ENCODE measurements at regions of chr10 and their contacts with region 1.

Region 1: GRCh38 chr10:87861953-87862678 is 1.2 kb downstream of the KLLN start:
- DNase-seq: peak; percentile 96
- ATAC-seq: peak; percentile 62
- H3K4me3 Mint-ChIP-seq: peak overlapping the region; percentile 98
- H3K27ac Mint-ChIP-seq: peak overlapping the region; percentile 94
- H3K4me1 Mint-ChIP-seq: peaks cover 28% of the 10 kb centered on the region
- H3K27me3 Mint-ChIP-seq: peaks cover 3% of the 10 kb centered on the region

Region 2: GRCh38 chr10:87850742-87851205 is 11.3 kb before region 1 on chr10:
- CTCF ChIA-PET with region 1: interaction called, 17 read pairs
- POLR2A ChIA-PET with region 1: interaction called, 14 read pairs
- DNase-seq: peak; percentile 74
- ATAC-seq: peak; percentile 94
- H3K4me3 Mint-ChIP-seq: no peak overlapping the region
- H3K27ac Mint-ChIP-seq: no peak overlapping the region
- H3K4me1 Mint-ChIP-seq: peaks cover 22% of the 10 kb centered on the region
- H3K27me3 Mint-ChIP-seq: no peaks in the 10 kb centered on the region

Region 3: DNA sequence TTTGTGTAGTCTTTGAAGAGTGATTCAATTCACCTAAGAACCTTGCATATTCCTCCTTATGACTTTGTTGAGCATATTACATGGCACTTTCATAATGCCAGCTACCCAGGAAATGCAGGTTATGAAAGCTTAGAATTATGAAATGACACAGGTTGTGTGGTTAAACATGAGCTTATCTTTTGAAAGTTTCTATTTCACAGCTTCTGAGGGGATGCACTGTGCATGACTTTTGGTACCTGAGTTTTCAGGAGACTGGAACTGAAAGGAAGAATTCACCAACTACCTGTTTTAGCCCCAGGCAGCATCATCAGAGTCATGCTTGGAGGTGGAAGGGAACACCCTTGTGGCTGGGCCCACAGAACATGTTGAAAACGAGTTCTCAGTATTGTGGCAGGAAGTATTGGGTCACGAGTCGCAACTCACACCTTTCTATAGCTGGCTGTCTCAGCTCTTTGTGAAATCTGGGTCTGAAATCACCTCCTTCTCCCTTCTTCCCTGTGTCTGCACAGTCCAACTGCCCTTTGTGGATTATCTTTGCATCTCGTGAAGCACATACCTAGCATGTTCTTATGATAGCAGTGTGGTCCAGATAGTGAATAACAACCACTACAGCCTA is 229.5 kb after region 1 on chr10:
- CTCF ChIA-PET with region 1: interaction called, 8 read pairs
- POLR2A ChIA-PET with region 1: interaction called, 12 read pairs
- DNase-seq: peak; percentile 88
- ATAC-seq: peak; percentile 99
- H3K4me3 Mint-ChIP-seq: peak overlapping the region; percentile 24
- H3K27ac Mint-ChIP-seq: peak overlapping the region; percentile 83
- H3K4me1 Mint-ChIP-seq: peaks cover 38% of the 10 kb centered on the region
- H3K27me3 Mint-ChIP-seq: peaks cover 19% of the 10 kb centered on the region

Region 4: DNA sequence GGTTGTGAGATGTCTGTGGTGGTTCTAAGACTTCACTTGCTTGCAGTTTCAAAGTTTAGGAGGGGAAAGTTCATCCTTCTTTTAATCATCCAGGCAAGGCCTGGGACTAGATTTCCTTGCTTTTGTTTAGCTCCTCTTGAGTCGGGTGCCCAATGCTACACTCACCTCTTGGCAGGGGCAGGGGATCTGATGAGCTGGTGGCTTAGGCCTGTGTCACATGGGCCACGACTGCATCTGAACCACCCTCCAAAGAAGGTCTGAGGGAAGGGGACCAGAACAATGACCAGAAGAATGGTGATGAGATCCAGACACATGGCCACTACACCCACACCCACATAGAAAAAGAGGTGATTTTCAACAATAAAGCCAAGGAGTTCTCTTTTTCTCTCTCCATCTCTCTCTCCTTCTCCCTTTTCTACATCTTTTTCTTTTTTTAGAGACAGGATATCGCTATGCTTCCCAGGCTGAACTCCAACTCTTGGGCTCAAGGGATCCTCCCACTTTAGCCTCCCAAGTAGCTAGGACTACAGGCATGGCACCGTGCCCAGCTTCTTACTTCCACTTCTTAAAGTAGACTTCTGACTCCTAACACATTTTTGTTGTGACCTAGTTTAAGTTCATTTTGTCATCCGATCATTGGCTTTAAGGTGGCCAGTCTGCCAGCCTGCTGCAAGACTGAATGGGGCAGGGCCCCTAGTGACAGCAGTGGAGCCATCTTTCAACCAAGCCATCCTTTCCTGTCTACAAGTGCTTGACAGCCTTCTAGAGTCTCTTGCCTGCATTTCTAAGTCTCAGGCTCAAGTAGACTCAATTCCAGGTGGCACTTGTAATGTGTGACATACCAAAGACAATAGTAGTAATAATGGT is 370.1 kb after region 1 on chr10:
- CTCF ChIA-PET with region 1: no interaction called
- POLR2A ChIA-PET with region 1: no interaction called
- DNase-seq: no peak
- ATAC-seq: no peak
- H3K4me3 Mint-ChIP-seq: no peak overlapping the region
- H3K27ac Mint-ChIP-seq: no peak overlapping the region
- H3K4me1 Mint-ChIP-seq: peaks cover 6% of the 10 kb centered on the region
- H3K27me3 Mint-ChIP-seq: peaks cover 4% of the 10 kb centered on the region

Region 5: GRCh38 chr10:88392222-88392621 is 530.1 kb after region 1 on chr10:
- CTCF ChIA-PET with region 1: interaction called, 82 read pairs
- POLR2A ChIA-PET with region 1: interaction called, 40 read pairs
- DNase-seq: peak; percentile 56
- ATAC-seq: peak; percentile 92
- H3K4me3 Mint-ChIP-seq: peak overlapping the region; percentile 7
- H3K27ac Mint-ChIP-seq: peak overlapping the region; percentile 55
- H3K4me1 Mint-ChIP-seq: peaks cover 15% of the 10 kb centered on the region
- H3K27me3 Mint-ChIP-seq: no peaks in the 10 kb centered on the region

Measured in activated CD8-positive, alpha-beta T cell treated with anti-CD3 and anti-CD28 coated beads, Interleukin-2, amount 10 ng/mL, durations not matched to agents 7 days and 5 days (primary cell).